Motor neuron (in vitro differentiated cells): ENCODE measurements at regions of chr4 and their contacts with region 1.

Region 1: DNA sequence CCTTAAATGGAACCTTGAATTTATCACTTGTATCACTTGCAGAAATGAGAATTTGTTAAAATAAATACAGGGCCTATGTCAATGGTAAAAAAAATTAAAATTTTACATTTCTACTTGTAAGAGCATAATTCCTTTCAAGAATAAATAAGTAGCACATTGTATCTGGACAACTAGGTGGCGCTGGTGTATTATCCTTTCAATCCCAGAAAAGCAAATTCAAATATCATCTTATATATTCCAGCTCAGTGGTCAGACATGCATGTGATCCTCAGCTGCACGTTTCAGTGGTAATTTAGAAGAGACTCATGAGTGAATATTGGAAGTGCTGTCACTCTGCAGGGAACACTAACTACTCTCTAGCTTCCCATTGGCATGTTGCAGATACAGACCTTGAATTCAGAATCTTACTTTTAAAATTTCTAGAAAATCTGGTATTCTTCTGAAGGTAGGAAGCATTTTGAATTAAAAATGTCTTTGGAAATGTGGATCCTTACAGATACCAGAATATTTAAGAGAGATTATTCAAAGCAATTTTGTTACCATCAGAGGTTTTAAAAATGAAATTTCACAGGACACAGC is 1414.7 kb upstream of the TENM3 start:
- ATAC-seq: peak; percentile 42 to 95 (median 82)
- H3K4me3 ChIP-seq: no peak overlapping the region
- H3K27ac ChIP-seq: no peak overlapping the region
- H3K4me1 ChIP-seq: peaks cover 16 to 21% of the 10 kb centered on the region in 2 donors

Region 2: DNA sequence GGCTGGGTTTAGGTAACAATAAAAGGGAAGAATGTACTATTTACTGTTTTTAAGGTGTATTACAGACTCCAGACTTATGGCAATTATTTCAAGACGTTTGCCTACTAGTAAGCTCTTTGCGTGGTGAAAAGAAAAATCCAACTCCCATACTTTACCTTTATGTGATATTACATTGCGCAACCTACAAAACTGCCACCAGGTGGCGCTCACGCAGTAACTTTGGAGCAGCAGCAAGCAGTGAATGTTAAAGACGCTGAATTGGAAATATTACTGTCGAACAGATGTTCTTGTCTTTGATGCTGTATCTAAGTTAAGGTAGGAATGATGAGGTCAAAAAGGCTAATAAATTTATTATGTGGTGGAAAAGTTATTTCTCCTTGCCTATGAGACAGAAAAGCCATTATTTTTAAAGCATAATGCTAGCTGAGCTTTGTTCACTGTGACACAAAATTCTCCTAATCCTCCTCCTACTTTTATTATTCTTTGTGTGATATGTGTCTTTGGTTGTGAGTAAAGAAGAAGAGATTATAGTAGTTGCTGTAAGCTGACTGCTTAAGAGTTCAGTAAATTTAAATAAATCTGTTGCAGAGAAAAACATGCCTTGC is 314.8 kb after region 1 on chr4:
- in situ Hi-C with region 1: loop called in 1 of 9 experiments (anchors 25 kb)
- ATAC-seq: peak; percentile 68 to 97 (median 73)
- H3K4me3 ChIP-seq: no peak overlapping the region
- H3K27ac ChIP-seq: no peak overlapping the region
- H3K4me1 ChIP-seq: peaks cover 3 to 10% of the 10 kb centered on the region in 2 donors

Region 3: DNA sequence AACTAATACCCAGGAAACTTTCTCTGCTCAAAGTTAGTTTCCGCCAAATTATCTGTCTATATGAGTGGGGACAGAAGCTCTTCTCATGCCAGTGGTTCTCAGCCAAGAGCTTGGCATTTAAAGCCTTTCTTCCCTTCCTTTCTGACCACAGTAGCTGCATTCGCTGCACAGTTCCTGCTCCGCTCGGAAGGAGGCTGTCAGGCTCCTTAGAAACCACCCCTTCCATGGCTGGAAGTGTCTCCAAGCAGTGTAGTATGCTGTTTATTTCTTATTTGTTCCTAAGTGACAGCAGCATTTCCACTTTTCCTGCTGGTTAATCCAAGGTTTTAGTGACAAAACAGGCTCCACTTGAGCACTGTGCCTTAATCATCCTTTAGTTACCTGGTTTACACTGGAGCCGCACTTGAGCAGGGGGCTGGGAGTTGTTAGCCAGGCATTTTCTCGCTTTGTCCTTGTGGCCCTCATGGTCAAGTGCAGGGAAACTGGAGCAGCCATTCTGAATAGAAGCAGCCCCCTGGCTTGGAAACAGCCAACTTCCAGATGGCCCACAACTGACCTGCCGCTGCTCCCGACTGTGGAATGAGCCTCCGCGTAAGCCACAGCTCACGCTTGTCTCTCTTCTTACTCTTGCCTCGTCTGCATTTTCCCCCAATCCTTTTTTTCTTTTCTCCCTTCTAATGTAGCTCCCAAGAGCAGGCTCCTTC is 675.3 kb after region 1 on chr4:
- in situ Hi-C with region 1: loop called in 1 of 9 experiments (anchors 25 kb)
- ATAC-seq: peak in 7 of 8 experiments; percentile 17 to 54 (median 37)
- H3K4me3 ChIP-seq: no peak overlapping the region
- H3K27ac ChIP-seq: no peak overlapping the region
- H3K4me1 ChIP-seq: peaks cover 37 to 38% of the 10 kb centered on the region in 2 donors